ENCODE measurements at regions of chrX and their contacts with region 1.

Region 1: DNA sequence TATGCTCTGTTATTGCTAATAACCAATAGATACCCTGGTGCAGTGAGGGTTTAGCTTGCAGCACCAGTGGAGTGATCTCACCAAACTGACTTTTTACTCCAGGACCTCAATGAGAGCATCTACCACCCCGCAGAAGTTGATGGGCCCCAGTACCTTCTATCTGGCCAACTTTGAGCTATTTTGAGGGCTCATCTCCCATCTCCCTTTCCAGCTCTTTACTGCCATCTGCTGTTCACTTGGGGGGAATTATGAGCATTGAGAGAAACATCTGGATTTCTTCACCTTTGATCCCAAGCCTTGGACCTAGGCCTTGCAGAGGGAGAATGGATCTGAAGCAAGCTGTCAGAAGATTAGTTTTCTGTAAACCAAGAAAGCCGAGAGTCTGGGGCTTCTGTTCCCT is 143.6 kb downstream of the TMEM164 start:
- DNase-seq: peak in 1 of 2 experiments; percentile 32
- H3K4me3 ChIP-seq: no peak overlapping the region
- H3K27ac ChIP-seq: no peak overlapping the region
- H3K4me1 ChIP-seq: no peaks in the 10 kb centered on the region
- H3K27me3 ChIP-seq: no peaks in the 10 kb centered on the region
- CTCF ChIP-seq: peak; percentile 78

Region 2: DNA sequence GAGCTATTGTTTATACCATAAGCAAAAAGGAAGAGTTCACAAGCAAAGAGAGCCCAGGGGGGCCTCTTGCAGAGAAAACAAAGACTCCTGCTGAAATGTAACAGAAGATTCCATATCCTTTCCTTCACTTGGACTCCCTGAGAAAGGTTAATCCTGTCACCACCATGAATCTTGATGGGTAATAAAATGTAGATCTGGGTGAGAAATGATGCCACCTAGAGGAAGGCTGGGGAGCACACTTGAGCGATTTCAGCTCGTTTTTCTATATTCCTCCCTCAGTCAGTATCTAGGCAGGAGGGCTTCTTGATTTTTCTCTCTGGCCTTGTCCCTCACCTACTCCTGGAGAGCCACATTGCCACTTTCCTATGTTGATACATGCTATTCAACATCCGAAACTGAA is 511.3 kb before region 1 on chrX:
- CTCF ChIA-PET with region 1: no interaction called
- POLR2A ChIA-PET with region 1: no interaction called
- intact Hi-C with region 1: loop called (anchors 10 kb)
- DNase-seq: peak in 1 of 2 experiments; percentile 4
- H3K4me3 ChIP-seq: no peak overlapping the region
- H3K27ac ChIP-seq: no peak overlapping the region
- H3K4me1 ChIP-seq: no peaks in the 10 kb centered on the region
- H3K27me3 ChIP-seq: no peaks in the 10 kb centered on the region
- CTCF ChIP-seq: peak; percentile 71

Region 3: GRCh38 chrX:109709129-109709631 is 437.3 kb before region 1 on chrX:
- CTCF ChIA-PET with region 1: interaction called, 3 read pairs
- POLR2A ChIA-PET with region 1: no interaction called
- intact Hi-C with region 1: loop called (anchors 1 kb)
- DNase-seq: peak; percentile 3 to 88
- H3K4me3 ChIP-seq: peak overlapping the region; percentile 13; the same call in 1 of the 2 replicates
- H3K27ac ChIP-seq: peak overlapping the region; percentile 74
- H3K4me1 ChIP-seq: peaks cover 33% of the 10 kb centered on the region
- H3K27me3 ChIP-seq: no peaks in the 10 kb centered on the region
- CTCF ChIP-seq: no peak

Region 4: GRCh38 chrX:109911046-109911445 is 235.5 kb before region 1 on chrX:
- CTCF ChIA-PET with region 1: interaction called, 7 read pairs
- POLR2A ChIA-PET with region 1: no interaction called
- intact Hi-C with region 1: loop called (anchors 1 kb)
- DNase-seq: no peak
- H3K4me3 ChIP-seq: no peak overlapping the region
- H3K27ac ChIP-seq: no peak overlapping the region
- H3K4me1 ChIP-seq: no peaks in the 10 kb centered on the region
- H3K27me3 ChIP-seq: no peaks in the 10 kb centered on the region
- CTCF ChIP-seq: peak; percentile 80